ENCODE measurements at regions of chr2 and their contacts with region 1.

Region 1: GRCh38 chr2:223993621-223994232 is 36.5 kb downstream of the MRPL44 start:
- DNase-seq: peak; percentile 45 to 62 (median 51)
- H3K4me3 ChIP-seq: no peak overlapping the region
- H3K4me3 Mint-ChIP-seq: no peak overlapping the region
- H3K27ac ChIP-seq: no peak overlapping the region
- H3K27ac Mint-ChIP-seq: no peak overlapping the region
- H3K4me1 ChIP-seq: no peaks in the 10 kb centered on the region
- H3K4me1 Mint-ChIP-seq: no peaks in the 10 kb centered on the region
- H3K27me3 ChIP-seq: no peaks in the 10 kb centered on the region
- H3K27me3 Mint-ChIP-seq: peaks cover 0 to 2% of the 10 kb centered on the region in 2 donors

Region 2: GRCh38 chr2:223970343-223971128 is 23.2 kb before region 1 on chr2:
- CTCF ChIA-PET with region 1: interaction called, 71 read pairs
- POLR2A ChIA-PET with region 1: no interaction called
- intact Hi-C with region 1: loop called (anchors 1 kb)
- DNase-seq: peak; percentile 44 to 54 (median 54)
- H3K4me3 ChIP-seq: no peak overlapping the region
- H3K4me3 Mint-ChIP-seq: no peak overlapping the region
- H3K27ac ChIP-seq: no peak overlapping the region
- H3K27ac Mint-ChIP-seq: peak overlapping the region in 2 of 7 donors; percentile 18 to 30
- H3K4me1 ChIP-seq: peaks cover 6% of the 10 kb centered on the region
- H3K4me1 Mint-ChIP-seq: peaks cover 2 to 8% (median 5%) of the 10 kb centered on the region in 4 donors
- H3K27me3 ChIP-seq: no peaks in the 10 kb centered on the region
- H3K27me3 Mint-ChIP-seq: no peaks in the 10 kb centered on the region

Region 3: GRCh38 chr2:224008702-224009261 is 15.1 kb after region 1 on chr2:
- CTCF ChIA-PET with region 1: interaction called, 47 read pairs
- POLR2A ChIA-PET with region 1: no interaction called
- intact Hi-C with region 1: no loop called
- DNase-seq: no peak
- H3K4me3 ChIP-seq: no peak overlapping the region
- H3K4me3 Mint-ChIP-seq: no peak overlapping the region
- H3K27ac ChIP-seq: no peak overlapping the region
- H3K27ac Mint-ChIP-seq: no peak overlapping the region
- H3K4me1 ChIP-seq: no peaks in the 10 kb centered on the region
- H3K4me1 Mint-ChIP-seq: peaks cover 0 to 4% (median under 1%) of the 10 kb centered on the region in 4 donors
- H3K27me3 ChIP-seq: no peaks in the 10 kb centered on the region
- H3K27me3 Mint-ChIP-seq: peaks cover 0 to 2% of the 10 kb centered on the region in 2 donors

Region 4: DNA sequence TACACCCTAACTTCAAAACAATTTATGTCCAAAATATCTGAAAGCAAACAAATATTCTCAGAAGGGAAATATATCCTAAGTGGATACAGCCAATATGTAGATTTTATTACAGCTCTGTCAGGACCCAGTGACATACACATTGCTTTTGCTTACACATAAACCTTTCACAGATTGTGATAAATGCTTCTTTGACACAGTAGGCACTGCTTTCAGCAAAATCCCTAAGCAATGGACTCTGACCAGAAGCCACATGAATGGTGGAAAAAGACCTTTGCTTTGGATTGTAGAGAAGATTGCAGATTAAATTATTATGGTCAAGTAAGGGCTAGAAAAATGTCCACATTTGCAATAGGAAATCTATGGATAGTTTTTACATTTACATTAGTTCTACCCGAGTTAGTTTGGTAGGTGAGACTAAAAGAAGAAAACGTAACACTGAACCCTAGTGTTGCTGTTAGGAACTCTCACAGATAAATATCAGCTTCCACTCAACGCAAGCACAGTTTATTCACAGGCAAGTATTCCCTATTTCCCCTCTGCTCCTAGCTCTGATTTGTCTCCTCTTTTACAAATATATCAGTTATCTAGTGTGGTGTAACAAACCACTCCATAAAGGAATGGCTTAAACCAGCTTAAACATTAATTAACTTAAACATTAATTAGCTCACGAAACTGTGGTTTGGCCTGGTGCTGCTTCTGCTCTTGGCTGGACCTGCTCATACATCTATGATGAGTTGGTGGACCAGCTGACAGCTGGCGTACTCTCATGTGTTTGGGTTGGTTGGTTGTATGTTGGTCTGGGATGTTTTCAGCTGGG is 69.0 kb after region 1 on chr2:
- CTCF ChIA-PET with region 1: interaction called, 12 read pairs
- POLR2A ChIA-PET with region 1: no interaction called
- intact Hi-C with region 1: no loop called
- DNase-seq: no peak
- H3K4me3 ChIP-seq: no peak overlapping the region
- H3K4me3 Mint-ChIP-seq: peak overlapping the region in 1 of 8 donors; percentile 19
- H3K27ac ChIP-seq: no peak overlapping the region
- H3K27ac Mint-ChIP-seq: no peak overlapping the region
- H3K4me1 ChIP-seq: no peaks in the 10 kb centered on the region
- H3K4me1 Mint-ChIP-seq: no peaks in the 10 kb centered on the region
- H3K27me3 ChIP-seq: no peaks in the 10 kb centered on the region
- H3K27me3 Mint-ChIP-seq: peaks cover 5 to 7% of the 10 kb centered on the region in 2 donors

Region 5: DNA sequence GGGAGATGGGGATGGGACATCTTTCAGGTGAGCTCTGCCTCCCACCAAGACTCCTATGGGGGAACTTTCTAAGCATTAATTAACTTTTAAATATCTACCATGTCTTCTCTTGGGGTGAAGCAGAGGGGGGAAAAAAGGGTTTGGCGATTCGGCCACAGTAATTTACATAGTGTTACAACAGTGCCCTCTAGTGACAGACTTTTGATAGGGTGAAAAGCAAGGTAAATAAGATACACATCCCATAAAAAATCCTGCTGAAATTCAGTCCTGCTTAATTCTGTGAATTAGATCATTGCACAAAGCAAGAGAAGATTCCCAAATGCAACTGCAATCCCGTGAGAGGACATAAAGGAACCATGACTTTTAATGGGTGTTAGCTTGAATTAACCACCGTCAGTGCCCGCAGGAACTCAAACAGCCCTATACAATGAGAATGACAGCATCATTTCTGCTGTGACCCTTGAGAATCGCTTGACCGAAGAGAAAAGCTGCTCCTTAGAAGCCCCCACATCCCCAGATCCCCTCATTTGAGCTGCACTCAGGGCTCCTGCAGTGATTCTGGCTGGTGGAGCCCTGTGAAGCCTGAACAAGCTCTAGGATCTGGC is 375.4 kb after region 1 on chr2:
- CTCF ChIA-PET with region 1: interaction called, 10 read pairs
- POLR2A ChIA-PET with region 1: no interaction called
- intact Hi-C with region 1: loop called (anchors 1 kb)
- DNase-seq: peak in 4 of 5 donors; percentile 15 to 32 (median 26)
- H3K4me3 ChIP-seq: no peak overlapping the region
- H3K4me3 Mint-ChIP-seq: no peak overlapping the region
- H3K27ac ChIP-seq: no peak overlapping the region
- H3K27ac Mint-ChIP-seq: no peak overlapping the region
- H3K4me1 ChIP-seq: no peaks in the 10 kb centered on the region
- H3K4me1 Mint-ChIP-seq: no peaks in the 10 kb centered on the region
- H3K27me3 ChIP-seq: no peaks in the 10 kb centered on the region
- H3K27me3 Mint-ChIP-seq: peaks cover 2 to 3% of the 10 kb centered on the region in 2 donors